ENCODE measurements at regions of chr7 and their contacts with region 1.

Region 1: DNA sequence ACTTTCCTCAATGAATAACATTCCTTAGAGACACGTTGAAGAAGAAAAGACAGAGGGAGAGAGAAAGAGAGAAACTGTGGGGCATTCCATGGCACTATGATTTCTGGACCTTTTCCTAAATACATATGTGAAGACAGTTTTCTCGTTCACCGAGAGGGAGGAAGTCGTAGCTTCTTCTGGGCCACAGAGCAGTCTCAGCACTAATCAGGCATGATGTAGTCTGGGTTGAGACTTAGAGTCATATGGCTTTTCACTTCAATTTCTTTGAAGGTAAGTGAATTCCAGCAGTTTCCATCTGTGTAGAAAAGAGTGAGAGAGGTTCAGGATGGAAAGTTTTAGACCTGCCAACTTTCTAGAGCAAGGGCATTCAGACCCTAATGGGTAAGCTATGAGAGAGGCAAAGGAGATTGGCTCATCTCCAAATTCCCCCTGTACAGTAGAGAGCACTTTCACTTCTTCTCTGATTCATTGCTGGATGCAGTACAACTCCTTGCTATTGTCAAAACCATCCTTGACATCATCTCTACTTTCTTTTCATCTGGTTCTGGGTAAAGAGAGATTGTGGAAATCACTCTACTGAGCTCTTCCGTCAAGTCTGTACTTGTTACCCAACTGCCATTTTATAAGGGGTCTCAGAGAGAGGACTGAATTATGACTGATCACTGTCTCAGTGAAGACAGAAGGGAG is 31.5 kb upstream of the OR9A4 start:
- DNase-seq: no peak
- H3K4me3 ChIP-seq: no peak overlapping the region
- H3K27ac ChIP-seq: no peak overlapping the region
- H3K27me3 ChIP-seq: no peaks in the 10 kb centered on the region
- CTCF ChIP-seq: no peak

Region 2: DNA sequence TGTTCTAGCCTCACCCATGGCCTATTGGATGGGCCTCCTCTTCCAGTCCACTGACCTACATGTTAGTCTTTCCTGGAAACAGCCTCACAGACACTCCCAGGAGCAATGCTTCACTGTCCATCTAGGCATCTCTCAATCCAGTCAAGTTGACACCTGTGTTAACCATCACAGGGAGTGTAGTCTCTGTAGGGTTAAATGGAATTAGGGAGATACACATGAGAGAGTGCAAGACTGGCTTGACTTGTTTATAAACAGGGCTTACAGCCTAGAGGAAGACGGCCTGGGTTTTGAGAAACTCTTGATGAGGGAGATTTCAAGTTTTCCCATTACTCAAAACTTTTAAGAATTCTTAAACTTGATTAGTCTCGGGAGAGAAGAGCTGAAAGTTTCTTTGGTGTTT is 24.5 kb before region 1 on chr7:
- intact Hi-C with region 1: loop called in 1 of 2 experiments (anchors 2 kb)
- DNase-seq: no peak
- H3K4me3 ChIP-seq: no peak overlapping the region
- H3K27ac ChIP-seq: no peak overlapping the region
- H3K27me3 ChIP-seq: no peaks in the 10 kb centered on the region
- CTCF ChIP-seq: no peak

Measured in dorsolateral prefrontal cortex (tissue), 120 donors.